ENCODE measurements at regions of chr19 and their contacts with region 1.

Region 1: GRCh38 chr19:52942386-52943133 is 19.3 kb upstream of the ZNF888 start:
- DNase-seq: peak; percentile 96 to 98
- ATAC-seq: peak; percentile 98
- H3K4me3 ChIP-seq: peak overlapping the region; percentile 74 to 82
- H3K27ac ChIP-seq: peak overlapping the region in 1 of 2 donors; percentile 88
- H3K4me1 ChIP-seq: no peaks in the 10 kb centered on the region
- H3K27me3 ChIP-seq: no peaks in the 10 kb centered on the region

Region 2: GRCh38 chr19:52962394-52963246 is 20.1 kb after region 1 on chr19 and contains the start of gene ZNF816:
- intact Hi-C with region 1: loop called in 1 of 2 experiments (anchors 2 kb)
- DNase-seq: peak; percentile 99 to 100
- ATAC-seq: peak; percentile 100
- H3K4me3 ChIP-seq: peak within 1 kb of the TSS; percentile 70 to 80
- H3K27ac ChIP-seq: peak within 1 kb of the TSS; percentile 84 to 94
- H3K4me1 ChIP-seq: peaks cover 0 to 3% of the 10 kb centered on the region in 2 donors
- H3K27me3 ChIP-seq: no peaks in the 10 kb centered on the region
- total RNA-seq, gene ZNF816: 5.4 to 11.4 TPM

Region 3: GRCh38 chr19:52993323-52994178 is 51.0 kb after region 1 on chr19:
- intact Hi-C with region 1: loop called in 1 of 2 experiments (anchors 10 kb)
- DNase-seq: peak; percentile 86 to 91
- ATAC-seq: peak; percentile 94
- H3K4me3 ChIP-seq: peak overlapping the region; percentile 24 to 85
- H3K27ac ChIP-seq: peak overlapping the region in 1 of 2 donors; percentile 58
- H3K4me1 ChIP-seq: peaks cover 0 to 2% of the 10 kb centered on the region in 2 donors
- H3K27me3 ChIP-seq: no peaks in the 10 kb centered on the region